ENCODE measurements at regions of chr7 and their contacts with region 1.

Region 1: GRCh38 chr7:85023045-85023712 is 163.7 kb downstream of the SEMA3D start:
- DNase-seq: peak; percentile 69
- ATAC-seq: no peak
- H3K4me3 ChIP-seq: no peak overlapping the region
- H3K27ac ChIP-seq: no peak overlapping the region
- H3K4me1 ChIP-seq: peaks cover 18% of the 10 kb centered on the region
- H3K27me3 ChIP-seq: no peaks in the 10 kb centered on the region
- CTCF ChIP-seq: peak; percentile 74

Region 2: GRCh38 chr7:83677180-83677866 is 1345.9 kb before region 1 on chr7:
- CTCF ChIA-PET with region 1: no interaction called
- POLR2A ChIA-PET with region 1: no interaction called
- intact Hi-C with region 1: loop called (anchors 1 kb)
- DNase-seq: peak; percentile 98
- ATAC-seq: peak; percentile 97
- H3K4me3 ChIP-seq: peak overlapping the region; percentile 22; the same call in 1 of the 2 replicates
- H3K27ac ChIP-seq: peak overlapping the region; percentile 71
- H3K4me1 ChIP-seq: peaks cover 16% of the 10 kb centered on the region
- H3K27me3 ChIP-seq: no peaks in the 10 kb centered on the region
- CTCF ChIP-seq: no peak

Region 3: DNA sequence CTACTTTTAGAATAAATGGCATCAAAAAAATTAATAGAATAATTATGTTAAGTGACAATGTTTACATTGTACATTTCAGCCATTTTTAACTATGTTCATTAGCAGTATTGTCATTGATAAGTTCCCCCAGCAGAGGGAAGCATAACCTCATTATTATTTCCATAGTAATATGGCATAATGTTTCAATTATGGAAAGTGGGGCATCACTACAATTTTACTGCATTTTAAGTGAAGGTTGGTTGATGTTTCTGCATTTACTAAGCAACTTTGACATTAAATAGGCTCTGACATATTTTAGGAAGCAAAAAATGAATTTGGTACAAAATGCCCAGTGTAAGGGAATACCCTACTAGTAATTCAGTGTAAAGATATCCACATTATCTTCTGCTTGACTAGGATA is 1046.9 kb before region 1 on chr7:
- CTCF ChIA-PET with region 1: no interaction called
- POLR2A ChIA-PET with region 1: no interaction called
- intact Hi-C with region 1: loop called (anchors 1 kb)
- DNase-seq: peak; percentile 74
- ATAC-seq: peak; percentile 56
- H3K4me3 ChIP-seq: no peak overlapping the region
- H3K27ac ChIP-seq: peak overlapping the region; percentile 29
- H3K4me1 ChIP-seq: no peaks in the 10 kb centered on the region
- H3K27me3 ChIP-seq: no peaks in the 10 kb centered on the region
- CTCF ChIP-seq: peak; percentile 83

Region 4: DNA sequence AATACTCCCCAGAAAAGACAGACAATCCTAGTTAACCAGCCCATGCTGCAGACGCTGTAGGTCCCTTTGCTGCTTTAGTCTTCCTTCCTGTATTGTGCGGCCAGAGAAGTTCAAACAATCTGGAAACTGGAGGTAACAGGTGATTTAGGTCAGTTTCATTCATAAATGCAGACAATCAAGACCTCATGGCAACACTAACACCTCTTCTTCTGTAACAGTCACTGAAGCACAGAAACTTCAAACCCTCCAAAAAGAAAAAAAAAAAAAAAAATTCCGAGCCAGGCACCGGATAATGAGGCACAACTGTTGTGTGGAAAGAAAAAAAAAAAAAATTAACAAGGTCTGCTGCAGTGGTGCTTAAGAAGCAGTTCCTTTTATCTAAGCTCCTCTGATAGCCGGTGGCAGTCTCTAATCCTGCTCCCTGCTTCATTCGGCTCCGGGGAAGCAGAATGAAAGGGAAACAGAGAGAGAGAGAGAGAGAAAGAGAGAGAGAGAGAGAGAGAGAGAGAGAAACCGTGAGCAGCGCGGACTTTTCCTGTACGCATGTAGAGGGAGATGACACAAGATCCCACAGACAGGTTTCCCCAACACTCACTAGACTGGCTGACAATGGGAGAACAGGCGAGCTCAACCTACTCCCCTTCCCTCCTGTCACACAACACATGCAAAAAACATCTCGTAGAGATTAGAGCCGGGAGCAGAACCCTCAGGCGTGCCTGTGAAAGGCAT is 828.5 kb before region 1 on chr7 and contains the start of gene SEMA3A:
- CTCF ChIA-PET with region 1: no interaction called
- POLR2A ChIA-PET with region 1: no interaction called
- intact Hi-C with region 1: loop called (anchors 1 kb)
- DNase-seq: peak; percentile 77
- ATAC-seq: peak; percentile 77
- H3K4me3 ChIP-seq: peak within 1 kb of the TSS; percentile 79
- H3K27ac ChIP-seq: peak within 1 kb of the TSS; percentile 94
- H3K4me1 ChIP-seq: peaks cover 36% of the 10 kb centered on the region
- H3K27me3 ChIP-seq: no peaks in the 10 kb centered on the region
- CTCF ChIP-seq: no peak
- total RNA-seq, gene SEMA3A: 13.7 and 16.9 TPM in 2 replicates

Region 5: DNA sequence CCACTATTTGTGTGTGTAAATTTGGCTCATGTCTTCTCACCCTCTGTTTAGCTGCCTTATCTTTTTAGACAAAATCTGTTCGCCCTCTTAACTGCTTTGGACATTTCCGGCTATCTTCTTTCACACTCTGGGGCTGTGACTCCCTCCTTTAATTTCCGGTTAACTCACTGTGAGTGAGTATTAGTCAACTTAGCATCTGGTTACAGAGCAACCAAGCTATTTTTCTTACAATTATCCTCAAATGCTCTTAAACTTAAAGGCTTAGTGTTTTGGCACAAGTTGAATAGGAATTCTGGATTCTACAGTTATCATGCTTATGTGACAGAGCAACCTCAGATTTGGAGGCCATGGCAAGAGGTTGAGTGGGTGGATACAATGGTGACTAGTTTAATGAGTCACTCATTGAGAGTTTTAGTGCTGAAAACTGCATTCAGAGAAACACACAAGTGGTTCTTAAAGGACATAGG is 651.0 kb before region 1 on chr7:
- CTCF ChIA-PET with region 1: no interaction called
- POLR2A ChIA-PET with region 1: no interaction called
- intact Hi-C with region 1: loop called (anchors 10 kb)
- DNase-seq: peak; percentile 88
- ATAC-seq: peak; percentile 88
- H3K4me3 ChIP-seq: no peak overlapping the region
- H3K27ac ChIP-seq: peak overlapping the region; percentile 80
- H3K4me1 ChIP-seq: peaks cover 34% of the 10 kb centered on the region
- H3K27me3 ChIP-seq: no peaks in the 10 kb centered on the region
- CTCF ChIP-seq: no peak

Region 6: GRCh38 chr7:84469034-84469433 is 554.1 kb before region 1 on chr7:
- CTCF ChIA-PET with region 1: no interaction called
- POLR2A ChIA-PET with region 1: no interaction called
- intact Hi-C with region 1: loop called (anchors 5 kb)
- DNase-seq: no peak
- ATAC-seq: no peak
- H3K4me3 ChIP-seq: no peak overlapping the region
- H3K27ac ChIP-seq: no peak overlapping the region
- H3K4me1 ChIP-seq: no peaks in the 10 kb centered on the region
- H3K27me3 ChIP-seq: no peaks in the 10 kb centered on the region
- CTCF ChIP-seq: no peak

Region 7: DNA sequence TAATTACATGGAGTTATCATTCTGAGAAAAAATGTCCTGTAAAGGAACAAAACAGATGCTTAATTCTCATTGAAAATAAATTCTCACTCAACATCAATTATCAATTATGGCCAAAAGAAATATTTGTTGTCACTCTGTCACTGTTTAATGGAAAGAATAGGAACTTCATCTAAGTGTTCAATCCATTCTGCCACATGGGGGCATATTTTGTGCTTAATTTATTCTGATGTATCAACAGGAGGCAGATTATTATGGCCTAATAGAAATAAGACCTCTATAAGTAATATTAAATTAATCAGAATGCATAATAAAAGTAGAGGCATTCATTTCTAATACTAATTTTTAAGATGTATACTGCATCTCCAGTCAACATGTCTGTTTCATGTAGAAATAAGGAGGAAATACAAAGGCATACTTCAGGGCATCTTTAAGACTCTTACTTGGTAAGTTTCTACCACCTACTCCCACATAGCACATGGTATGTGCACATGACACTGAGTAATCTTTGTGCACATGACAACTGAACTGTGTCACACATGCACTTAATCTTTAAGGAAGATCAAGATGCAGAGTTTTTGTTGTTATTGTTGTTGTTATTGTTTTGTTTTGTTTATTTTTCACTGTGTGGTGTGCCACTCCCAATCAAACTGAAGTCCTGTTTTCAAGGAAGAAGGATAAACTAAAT is 408.2 kb before region 1 on chr7:
- CTCF ChIA-PET with region 1: no interaction called
- POLR2A ChIA-PET with region 1: no interaction called
- intact Hi-C with region 1: loop called (anchors 5 kb)
- DNase-seq: peak; percentile 31
- ATAC-seq: no peak
- H3K4me3 ChIP-seq: no peak overlapping the region
- H3K27ac ChIP-seq: no peak overlapping the region
- H3K4me1 ChIP-seq: peaks cover 8% of the 10 kb centered on the region
- H3K27me3 ChIP-seq: no peaks in the 10 kb centered on the region
- CTCF ChIP-seq: peak; percentile 44